ENCODE measurements at regions of chr2 and their contacts with region 1.

Region 1: GRCh38 chr2:162221064-162221463 is 22.2 kb downstream of the FAP start:
- DNase-seq: peak; percentile 74
- H3K4me3 Mint-ChIP-seq: no peak overlapping the region
- H3K27ac Mint-ChIP-seq: no peak overlapping the region
- H3K4me1 Mint-ChIP-seq: no peaks in the 10 kb centered on the region
- H3K27me3 Mint-ChIP-seq: peaks cover 9% of the 10 kb centered on the region

Region 2: GRCh38 chr2:162085090-162085891 is 135.8 kb before region 1 on chr2:
- CTCF ChIA-PET with region 1: no interaction called
- intact Hi-C with region 1: no loop called
- DNase-seq: no peak
- H3K4me3 Mint-ChIP-seq: no peak overlapping the region
- H3K27ac Mint-ChIP-seq: no peak overlapping the region
- H3K4me1 Mint-ChIP-seq: no peaks in the 10 kb centered on the region
- H3K27me3 Mint-ChIP-seq: no peaks in the 10 kb centered on the region

Region 3: DNA sequence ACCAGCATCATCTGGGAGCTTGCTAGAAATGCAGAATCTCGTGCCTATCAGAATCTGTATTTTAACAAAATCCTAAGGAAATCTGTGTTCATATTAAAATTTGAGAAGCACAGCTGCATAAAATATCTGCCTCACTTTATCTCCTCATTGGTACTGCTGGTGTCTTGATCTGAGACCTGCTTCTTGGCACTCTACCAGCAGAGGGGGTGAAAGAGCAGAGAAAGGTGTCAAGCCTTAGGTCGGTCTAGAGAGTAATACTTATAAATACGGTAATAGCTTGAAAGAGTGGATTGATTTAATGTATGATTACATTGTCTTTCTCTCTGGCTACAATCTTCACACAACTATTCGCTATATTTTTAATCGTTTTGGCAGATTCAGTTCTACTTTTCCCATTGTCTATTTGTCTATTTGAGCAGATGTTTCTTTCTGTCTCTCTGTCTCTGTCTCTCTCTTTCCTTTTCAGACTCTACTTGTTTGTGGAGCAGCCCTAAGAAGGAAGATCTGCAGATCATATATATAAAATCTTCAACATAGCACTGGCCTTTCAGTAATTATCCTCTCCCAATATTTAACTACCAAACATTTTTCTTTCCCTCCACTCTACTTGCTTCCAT is 67.3 kb before region 1 on chr2:
- CTCF ChIA-PET with region 1: interaction called, 17 read pairs
- intact Hi-C with region 1: loop called (anchors 1 kb)
- DNase-seq: peak; percentile 81
- H3K4me3 Mint-ChIP-seq: no peak overlapping the region
- H3K27ac Mint-ChIP-seq: no peak overlapping the region
- H3K4me1 Mint-ChIP-seq: no peaks in the 10 kb centered on the region
- H3K27me3 Mint-ChIP-seq: peaks cover 14% of the 10 kb centered on the region

Region 4: DNA sequence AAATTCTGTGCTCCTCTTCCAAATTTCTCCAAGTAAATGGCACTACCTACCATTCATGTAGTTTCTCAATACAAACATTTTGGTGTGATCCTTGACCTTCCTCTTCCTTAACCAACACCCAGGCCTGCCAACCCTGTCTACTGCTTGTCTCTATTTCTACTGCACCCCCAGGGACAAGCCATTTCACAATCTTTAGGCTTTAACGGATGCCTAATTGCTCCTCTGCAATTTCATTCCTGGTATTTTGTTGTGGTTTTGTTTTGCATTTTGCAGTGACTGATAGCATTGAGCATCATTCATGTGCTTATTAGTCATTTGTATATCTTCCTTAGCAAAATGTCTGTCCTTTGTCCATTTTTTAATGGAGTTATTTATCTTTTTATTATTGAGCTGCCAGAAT is 12.1 kb after region 1 on chr2:
- CTCF ChIA-PET with region 1: interaction called, 18 read pairs
- intact Hi-C with region 1: no loop called
- DNase-seq: no peak
- H3K4me3 Mint-ChIP-seq: no peak overlapping the region
- H3K27ac Mint-ChIP-seq: no peak overlapping the region
- H3K4me1 Mint-ChIP-seq: no peaks in the 10 kb centered on the region
- H3K27me3 Mint-ChIP-seq: peaks cover 6% of the 10 kb centered on the region

Region 5: DNA sequence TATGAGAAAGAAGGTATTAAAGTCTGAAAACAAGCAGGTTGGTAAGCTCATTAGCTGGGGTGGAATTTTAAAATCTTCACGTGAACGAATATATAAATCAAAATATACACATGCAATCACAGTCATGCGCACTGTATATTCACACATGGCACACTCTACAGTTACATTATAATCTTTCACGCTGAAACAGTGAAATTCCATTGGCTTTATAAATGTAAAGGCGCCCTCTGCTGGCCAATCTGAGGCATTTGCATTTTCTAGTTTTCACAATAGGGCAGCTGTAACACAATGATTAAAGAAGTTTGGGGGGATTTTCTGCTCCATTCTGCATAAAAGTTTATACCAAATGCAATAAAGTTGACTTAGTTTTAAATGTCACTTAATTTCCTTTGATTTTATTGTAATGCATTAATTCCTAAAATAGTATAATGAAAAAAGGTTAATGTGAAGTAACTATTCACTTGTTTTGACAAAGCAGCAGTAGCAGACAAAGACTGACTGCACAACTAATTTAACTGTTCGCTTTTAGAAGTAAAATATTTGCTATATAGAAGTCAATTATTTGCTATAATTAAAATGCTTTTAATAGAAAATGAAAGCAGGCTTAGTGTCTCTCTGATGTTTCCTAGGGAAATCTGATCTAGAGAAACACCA is 80.2 kb after region 1 on chr2:
- CTCF ChIA-PET with region 1: interaction called, 204 read pairs
- intact Hi-C with region 1: loop called (anchors 1 kb)
- DNase-seq: peak; percentile 71
- H3K4me3 Mint-ChIP-seq: no peak overlapping the region
- H3K27ac Mint-ChIP-seq: no peak overlapping the region
- H3K4me1 Mint-ChIP-seq: no peaks in the 10 kb centered on the region
- H3K27me3 Mint-ChIP-seq: no peaks in the 10 kb centered on the region

Region 6: DNA sequence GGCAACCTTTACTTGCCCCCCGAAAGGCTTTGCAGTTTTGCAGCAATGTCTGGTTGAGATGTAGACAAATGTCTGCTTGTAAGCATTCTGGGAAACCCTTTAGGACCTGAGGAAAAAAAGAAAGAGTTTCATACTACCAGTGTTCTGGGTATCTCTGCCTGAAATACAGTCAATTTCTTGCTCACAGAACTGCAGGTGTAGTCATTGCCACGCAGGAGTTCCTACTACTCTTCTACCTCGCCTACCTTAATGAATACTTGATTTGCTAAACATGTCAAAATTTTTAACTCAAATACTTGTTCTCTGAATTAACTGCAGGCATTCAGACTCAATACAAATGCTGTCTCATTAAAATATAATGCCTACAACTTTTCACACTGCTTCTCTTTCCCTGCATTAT is 179.3 kb after region 1 on chr2:
- CTCF ChIA-PET with region 1: no interaction called
- intact Hi-C with region 1: no loop called
- DNase-seq: no peak
- H3K4me3 Mint-ChIP-seq: no peak overlapping the region
- H3K27ac Mint-ChIP-seq: no peak overlapping the region
- H3K4me1 Mint-ChIP-seq: no peaks in the 10 kb centered on the region
- H3K27me3 Mint-ChIP-seq: peaks cover 3% of the 10 kb centered on the region

Region 7: GRCh38 chr2:163132850-163133249 is 911.8 kb after region 1 on chr2:
- CTCF ChIA-PET with region 1: interaction called, 6 read pairs
- intact Hi-C with region 1: loop called (anchors 5 kb)
- DNase-seq: no peak
- H3K4me3 Mint-ChIP-seq: no peak overlapping the region
- H3K27ac Mint-ChIP-seq: no peak overlapping the region
- H3K4me1 Mint-ChIP-seq: no peaks in the 10 kb centered on the region
- H3K27me3 Mint-ChIP-seq: no peaks in the 10 kb centered on the region